Posterior vena cava (tissue), 2 donors: ENCODE measurements at regions of chr1 and their contacts with region 1.

Region 1: GRCh38 chr1:206133751-206134415 is 16.7 kb upstream of the AVPR1B start:
- DNase-seq: no peak

Region 2: GRCh38 chr1:205939690-205940330 is 194.1 kb before region 1 on chr1:
- intact Hi-C with region 1: no loop called
- DNase-seq: no peak

Region 3: DNA sequence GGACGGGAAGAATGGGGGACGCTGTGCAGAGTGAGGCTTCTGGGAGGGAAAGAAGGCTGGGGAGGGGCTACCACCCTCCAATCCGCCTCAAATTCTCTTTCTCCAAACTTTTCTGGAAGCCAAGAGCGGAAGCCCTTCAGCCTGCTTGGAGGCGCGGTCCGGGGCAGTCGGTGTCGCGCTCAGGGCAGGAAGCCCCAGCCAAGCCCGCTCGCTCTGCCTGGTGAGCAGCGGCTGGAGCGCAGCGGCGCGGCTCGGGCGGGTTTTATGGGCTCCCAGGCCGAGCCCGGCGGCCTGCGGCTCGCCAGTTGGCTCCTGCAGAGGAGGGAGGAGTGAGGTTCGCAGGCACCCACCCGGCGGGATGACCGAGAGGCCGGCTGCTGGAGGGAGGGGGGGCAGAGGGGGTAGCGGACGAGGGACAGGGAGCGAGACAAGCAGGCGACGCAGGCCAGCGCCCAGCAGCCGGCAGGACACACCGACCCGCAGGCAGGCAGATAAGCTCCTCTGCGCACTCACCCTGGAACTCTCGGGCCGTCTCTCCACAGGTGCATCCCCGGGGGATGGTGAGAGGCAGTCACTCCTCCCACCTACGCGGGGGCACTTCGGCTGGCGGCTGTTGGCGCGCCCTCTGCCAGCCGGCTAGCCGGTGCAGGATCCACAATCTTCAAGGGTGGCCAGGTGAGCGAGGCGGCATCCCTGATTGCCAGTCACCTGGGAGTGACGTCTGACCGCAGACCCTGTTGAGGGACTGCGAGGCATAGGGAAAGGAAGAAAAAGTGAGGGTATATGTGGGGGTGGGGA is 16.5 kb before region 1 on chr1 and contains the start of gene AVPR1B:
- intact Hi-C with region 1: loop called in 1 of 2 experiments (anchors 1 kb)
- DNase-seq: peak; percentile 86
- total RNA-seq, gene AVPR1B: not detected